ENCODE measurements at regions of chr11 and their contacts with region 1.

Region 1: GRCh38 chr11:31887180-31887579 is 76.1 kb upstream of the PAX6 start:
- DNase-seq: no peak
- H3K4me3 ChIP-seq: no peak overlapping the region
- H3K27ac ChIP-seq: no peak overlapping the region
- H3K4me1 ChIP-seq: peaks cover 18% of the 10 kb centered on the region
- H3K27me3 ChIP-seq: no peaks in the 10 kb centered on the region
- CTCF ChIP-seq: peak; percentile 58

Region 2: GRCh38 chr11:31107062-31107461 is 780.1 kb before region 1 on chr11:
- CTCF ChIA-PET with region 1: no interaction called
- POLR2A ChIA-PET with region 1: no interaction called
- intact Hi-C with region 1: loop called (anchors 10 kb)
- DNase-seq: peak; percentile 42 to 60
- H3K4me3 ChIP-seq: no peak overlapping the region
- H3K27ac ChIP-seq: no peak overlapping the region
- H3K4me1 ChIP-seq: no peaks in the 10 kb centered on the region
- H3K27me3 ChIP-seq: no peaks in the 10 kb centered on the region
- CTCF ChIP-seq: peak; percentile 87

Region 3: DNA sequence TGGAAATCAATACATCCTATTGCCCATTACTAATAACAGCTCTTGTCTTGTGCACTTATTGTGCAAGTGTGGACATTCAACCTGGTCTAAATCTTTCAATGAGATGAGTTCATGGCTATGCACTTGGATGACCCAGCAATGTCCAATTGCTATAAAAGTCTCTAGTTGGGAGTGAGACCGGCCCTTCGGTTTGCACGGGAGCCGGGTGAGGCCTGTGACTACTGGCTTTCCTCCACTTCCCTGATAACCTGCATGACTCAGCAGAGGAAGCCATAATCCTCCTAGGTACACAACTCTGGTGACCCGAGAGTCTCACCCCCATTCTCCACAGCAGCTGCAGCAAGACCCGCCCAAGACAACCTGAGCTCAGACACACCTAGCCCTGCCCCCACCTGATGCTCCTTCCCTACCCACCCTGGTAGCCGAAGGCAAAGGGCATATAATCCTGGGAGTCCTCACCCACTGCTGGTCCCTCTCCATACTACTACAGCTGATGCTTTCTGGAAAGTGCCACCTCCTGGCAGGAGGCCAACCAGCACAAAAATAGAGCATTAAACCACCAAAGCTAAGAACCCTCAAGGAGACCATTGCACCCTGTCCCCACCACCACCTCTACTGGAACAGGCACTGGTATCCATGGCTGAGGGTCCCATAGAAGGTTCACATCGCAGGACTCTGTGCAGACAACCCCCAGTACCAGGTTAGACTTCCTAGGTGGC is 60.0 kb after region 1 on chr11:
- CTCF ChIA-PET with region 1: no interaction called
- POLR2A ChIA-PET with region 1: no interaction called
- intact Hi-C with region 1: no loop called
- DNase-seq: peak in 1 of 2 experiments; percentile 43
- H3K4me3 ChIP-seq: no peak overlapping the region
- H3K27ac ChIP-seq: no peak overlapping the region
- H3K4me1 ChIP-seq: peaks cover 10% of the 10 kb centered on the region
- H3K27me3 ChIP-seq: no peaks in the 10 kb centered on the region
- CTCF ChIP-seq: no peak

Measured in PC-9 (cell line).